ENCODE measurements at regions of chr6 and their contacts with region 1.

Region 1: GRCh38 chr6:6545616-6546317 is 42.8 kb upstream of the LY86 start:
- DNase-seq: no peak
- H3K4me3 ChIP-seq: peak overlapping the region in 1 of 4 donors; percentile 47
- H3K27ac ChIP-seq: no peak overlapping the region
- H3K4me1 ChIP-seq: peaks cover 10 to 11% of the 10 kb centered on the region in 2 donors
- H3K27me3 ChIP-seq: peaks cover 9% of the 10 kb centered on the region
- CTCF ChIP-seq: no peak
- POLR2A ChIP-seq: no peak

Region 2: GRCh38 chr6:6474170-6474920 is 71.4 kb before region 1 on chr6:
- intact Hi-C with region 1: no loop called
- DNase-seq: peak in 3 of 7 donors; percentile 26 to 90 (median 34)
- H3K4me3 ChIP-seq: no peak overlapping the region
- H3K27ac ChIP-seq: no peak overlapping the region
- H3K4me1 ChIP-seq: peaks cover 0 to 6% of the 10 kb centered on the region in 2 donors
- H3K27me3 ChIP-seq: no peaks in the 10 kb centered on the region
- CTCF ChIP-seq: no peak
- POLR2A ChIP-seq: no peak

Region 3: DNA sequence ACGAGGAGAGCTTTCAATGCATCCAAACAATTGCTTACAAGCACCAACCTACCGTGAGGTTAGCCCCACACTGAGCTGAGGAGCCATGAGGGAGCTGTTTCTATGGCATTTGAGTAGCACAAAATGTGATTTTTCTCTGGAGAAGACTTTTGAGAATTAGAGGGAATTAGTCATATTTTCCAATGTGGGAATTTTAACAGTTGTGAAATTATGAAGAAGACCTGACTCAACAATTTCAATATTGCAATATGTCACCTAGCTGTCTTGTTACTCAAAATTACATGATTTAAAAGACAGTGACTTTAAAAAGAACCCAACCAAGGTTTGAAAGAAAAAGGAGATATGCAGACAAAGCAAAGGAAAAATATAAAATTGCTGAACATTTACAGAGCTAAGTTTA is 19.8 kb before region 1 on chr6:
- intact Hi-C with region 1: loop called in 1 of 2 experiments (anchors 2 kb)
- DNase-seq: no peak
- H3K4me3 ChIP-seq: no peak overlapping the region
- H3K27ac ChIP-seq: no peak overlapping the region
- H3K4me1 ChIP-seq: no peaks in the 10 kb centered on the region
- H3K27me3 ChIP-seq: no peaks in the 10 kb centered on the region
- CTCF ChIP-seq: no peak
- POLR2A ChIP-seq: no peak

Region 4: DNA sequence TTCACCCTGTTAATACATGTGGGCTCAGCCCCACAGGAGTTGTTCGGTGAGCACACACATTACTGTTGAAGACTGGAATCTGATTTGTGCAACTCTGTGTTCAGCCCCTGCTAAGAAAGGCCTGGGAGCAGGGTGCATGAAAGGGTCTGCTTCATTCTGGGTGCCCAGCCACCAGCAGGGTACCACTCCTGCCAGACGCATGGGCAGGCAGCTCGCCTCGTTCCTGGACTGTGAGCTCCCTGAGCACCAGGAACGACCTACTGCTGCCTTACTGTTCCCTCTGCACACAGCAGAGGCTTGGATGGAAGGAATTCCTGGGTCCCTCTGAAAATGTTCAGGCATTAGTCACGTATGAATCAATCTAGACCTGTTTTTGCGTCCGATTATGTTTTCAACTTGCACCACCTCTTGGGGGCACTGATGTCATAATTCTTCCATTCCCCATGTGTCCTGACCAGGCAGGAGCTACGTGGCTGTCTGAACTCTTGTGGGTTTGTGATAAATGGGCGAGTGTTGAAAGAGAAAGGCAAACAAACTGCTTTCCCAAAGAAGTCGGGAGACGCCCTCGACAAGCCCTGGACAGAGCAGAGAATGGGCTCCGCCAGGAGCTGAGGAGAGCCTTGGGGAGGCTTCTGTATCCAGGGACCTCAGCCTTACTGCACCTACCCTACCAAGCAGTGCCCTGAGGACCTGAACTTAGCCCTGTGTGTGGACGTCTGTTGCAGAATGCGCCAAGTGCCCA is 166.7 kb after region 1 on chr6:
- intact Hi-C with region 1: no loop called
- DNase-seq: peak in 3 of 7 donors; percentile 47 to 59 (median 52)
- H3K4me3 ChIP-seq: no peak overlapping the region
- H3K27ac ChIP-seq: peak overlapping the region in 1 of 5 donors; percentile 20
- H3K4me1 ChIP-seq: peaks cover 0 to 12% of the 10 kb centered on the region in 2 donors
- H3K27me3 ChIP-seq: no peaks in the 10 kb centered on the region
- CTCF ChIP-seq: no peak
- POLR2A ChIP-seq: no peak